ENCODE measurements at regions of chr4 and their contacts with region 1.

Region 1: GRCh38 chr4:781493-782216 is 44.3 kb downstream of the CPLX1 start:
- DNase-seq: peak; percentile 100
- H3K4me3 Mint-ChIP-seq: peak overlapping the region; percentile 88
- H3K27ac Mint-ChIP-seq: peak overlapping the region; percentile 95
- H3K4me1 Mint-ChIP-seq: peaks cover 41% of the 10 kb centered on the region
- H3K27me3 Mint-ChIP-seq: peaks cover 15% of the 10 kb centered on the region

Region 2: GRCh38 chr4:705278-706082 is 76.2 kb before region 1 on chr4 and contains the start of gene PCGF3:
- intact Hi-C with region 1: loop called (anchors 1 kb)
- DNase-seq: peak; percentile 99
- H3K4me3 Mint-ChIP-seq: peak within 1 kb of the TSS; percentile 91
- H3K27ac Mint-ChIP-seq: peak within 1 kb of the TSS; percentile 86
- H3K4me1 Mint-ChIP-seq: peaks cover 17% of the 10 kb centered on the region
- H3K27me3 Mint-ChIP-seq: no peaks in the 10 kb centered on the region
- total RNA-seq, gene PCGF3: 32.1 and 34.5 TPM in 2 replicates

Region 3: GRCh38 chr4:742742-743311 is 38.8 kb before region 1 on chr4:
- intact Hi-C with region 1: no loop called
- DNase-seq: peak; percentile 93
- H3K4me3 Mint-ChIP-seq: no peak overlapping the region
- H3K27ac Mint-ChIP-seq: peak overlapping the region; percentile 53
- H3K4me1 Mint-ChIP-seq: peaks cover 3% of the 10 kb centered on the region
- H3K27me3 Mint-ChIP-seq: no peaks in the 10 kb centered on the region

Region 4: DNA sequence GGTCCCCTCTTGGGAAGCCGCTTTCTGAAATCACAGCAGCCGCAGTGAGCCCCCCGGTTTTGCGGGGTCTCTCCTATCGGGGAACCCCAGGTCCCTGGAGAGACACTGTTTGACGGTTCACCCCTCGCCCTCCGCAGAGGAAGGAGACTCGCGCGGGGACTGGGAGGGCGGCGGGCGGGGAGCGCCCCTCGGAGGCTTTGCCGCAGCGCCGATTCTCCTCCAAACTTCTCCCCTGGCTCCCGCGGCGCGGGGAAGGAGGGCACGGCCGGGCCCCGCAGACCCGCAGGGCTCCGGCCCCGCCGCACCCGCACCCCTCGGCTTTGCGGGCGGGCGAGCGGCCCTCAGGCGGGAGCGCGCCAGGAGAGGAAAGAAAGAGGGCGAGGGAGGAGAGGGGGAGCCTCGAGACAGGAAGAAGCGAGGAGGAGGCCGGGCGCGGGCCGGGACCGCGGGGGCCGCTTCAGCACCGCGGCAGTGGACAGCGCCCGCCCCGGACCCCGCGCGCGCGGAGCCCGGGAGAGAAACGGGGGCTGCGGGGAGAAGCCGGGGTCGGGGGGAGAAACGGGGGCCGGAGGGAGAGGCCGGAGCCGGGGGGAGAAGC is 43.7 kb after region 1 on chr4:
- intact Hi-C with region 1: loop called (anchors 5 kb)
- DNase-seq: peak; percentile 79
- H3K4me3 Mint-ChIP-seq: peak overlapping the region; percentile 39
- H3K27ac Mint-ChIP-seq: peak overlapping the region; percentile 56
- H3K4me1 Mint-ChIP-seq: peaks cover 2% of the 10 kb centered on the region
- H3K27me3 Mint-ChIP-seq: peaks cover 39% of the 10 kb centered on the region

Region 5: DNA sequence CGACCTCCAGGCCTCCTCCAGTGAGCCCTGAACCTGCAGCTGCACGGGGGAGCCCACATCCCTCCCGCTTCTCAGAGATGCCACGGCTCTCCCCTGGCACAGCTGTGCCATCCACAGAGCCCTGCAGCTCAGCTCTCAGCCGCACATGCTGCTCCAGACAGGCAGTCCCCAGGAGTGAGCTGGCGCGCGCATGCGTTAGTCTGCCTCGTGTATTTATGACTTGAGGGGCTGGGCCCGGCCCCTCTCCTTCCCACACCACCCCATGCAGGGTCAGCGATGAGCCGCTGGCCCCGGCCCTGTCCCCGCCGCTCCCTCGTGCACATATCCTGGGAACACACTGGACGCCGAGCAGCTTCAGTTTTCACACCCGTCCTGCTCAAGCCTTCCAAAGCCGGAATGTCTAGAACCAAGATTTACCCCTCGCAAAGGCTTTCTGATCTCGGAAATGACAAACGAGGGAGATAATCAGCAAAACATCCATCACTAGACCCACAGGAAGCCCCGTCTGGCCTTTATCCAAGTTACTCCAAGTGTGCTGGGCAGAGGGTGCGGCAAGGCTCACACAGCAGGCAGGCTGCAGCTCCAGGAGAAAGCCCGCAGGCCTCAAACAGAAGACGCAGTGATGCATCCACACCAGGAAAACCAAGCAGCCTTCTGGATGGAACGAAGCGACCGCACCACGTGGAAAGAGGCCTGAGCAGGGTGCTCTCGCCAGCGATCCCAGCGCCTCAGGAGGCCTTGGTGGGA is 126.2 kb after region 1 on chr4:
- intact Hi-C with region 1: no loop called
- DNase-seq: no peak
- H3K4me3 Mint-ChIP-seq: no peak overlapping the region
- H3K27ac Mint-ChIP-seq: no peak overlapping the region
- H3K4me1 Mint-ChIP-seq: no peaks in the 10 kb centered on the region
- H3K27me3 Mint-ChIP-seq: no peaks in the 10 kb centered on the region

Region 6: GRCh38 chr4:931960-932712 is 150.5 kb after region 1 on chr4 and contains the starts of genes GAK and TMEM175:
- intact Hi-C with region 1: loop called (anchors 5 kb)
- DNase-seq: peak; percentile 100
- H3K4me3 Mint-ChIP-seq: peak within 1 kb of the TSS; percentile 99
- H3K27ac Mint-ChIP-seq: peak within 1 kb of the TSS; percentile 95
- H3K4me1 Mint-ChIP-seq: peaks cover 40% of the 10 kb centered on the region
- H3K27me3 Mint-ChIP-seq: no peaks in the 10 kb centered on the region
- total RNA-seq, gene GAK: 131 and 147 TPM in 2 replicates
- total RNA-seq, gene TMEM175: 12.7 and 13.9 TPM in 2 replicates

Region 7: GRCh38 chr4:973431-974397 is 192.1 kb after region 1 on chr4 and contains the start of gene DGKQ:
- intact Hi-C with region 1: loop called (anchors 1 kb)
- DNase-seq: peak; percentile 95
- H3K4me3 Mint-ChIP-seq: peak within 1 kb of the TSS; percentile 67
- H3K27ac Mint-ChIP-seq: no peak within 1 kb of the TSS
- H3K4me1 Mint-ChIP-seq: peaks cover 5% of the 10 kb centered on the region
- H3K27me3 Mint-ChIP-seq: no peaks in the 10 kb centered on the region
- total RNA-seq, gene DGKQ: 15.2 and 16.6 TPM in 2 replicates

Region 8: DNA sequence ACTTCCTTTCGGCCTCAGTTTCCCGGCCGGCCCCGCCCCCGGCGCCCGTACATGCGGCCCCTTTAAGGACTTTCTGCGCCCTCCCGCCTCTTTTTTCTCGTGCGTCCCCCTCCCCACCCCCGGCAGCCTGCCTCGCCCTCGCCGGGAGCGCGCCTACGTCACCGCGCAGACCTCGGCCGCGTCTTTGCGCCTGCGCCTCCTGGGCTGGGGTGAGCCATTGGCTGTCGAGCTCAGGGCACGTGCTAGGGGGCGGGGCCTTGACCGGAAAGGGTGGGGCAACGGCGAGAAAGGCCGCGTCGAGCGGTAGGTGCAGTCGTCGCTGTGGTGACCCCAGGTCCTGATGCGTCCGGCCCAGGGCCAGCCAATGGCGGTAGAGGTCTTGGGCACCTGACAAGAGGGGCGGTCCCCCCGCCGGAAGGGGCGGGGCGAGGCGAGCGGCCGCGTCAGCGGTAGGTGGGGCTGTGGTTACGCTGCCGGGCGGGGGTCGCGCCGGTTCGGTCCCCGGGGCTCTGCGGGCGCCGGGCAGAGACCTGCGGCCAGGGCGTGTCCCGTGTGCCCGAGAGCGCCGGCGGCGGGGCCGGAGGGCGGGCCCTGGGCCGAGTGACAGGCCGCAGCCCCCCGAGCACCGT is 565.2 kb after region 1 on chr4 and contains the start of gene UVSSA:
- intact Hi-C with region 1: loop called (anchors 5 kb)
- DNase-seq: peak; percentile 100
- H3K4me3 Mint-ChIP-seq: peak within 1 kb of the TSS; percentile 98
- H3K27ac Mint-ChIP-seq: peak within 1 kb of the TSS; percentile 94
- H3K4me1 Mint-ChIP-seq: peaks cover 35% of the 10 kb centered on the region
- H3K27me3 Mint-ChIP-seq: no peaks in the 10 kb centered on the region
- total RNA-seq, gene UVSSA: 28.3 and 28.4 TPM in 2 replicates

Region 9: DNA sequence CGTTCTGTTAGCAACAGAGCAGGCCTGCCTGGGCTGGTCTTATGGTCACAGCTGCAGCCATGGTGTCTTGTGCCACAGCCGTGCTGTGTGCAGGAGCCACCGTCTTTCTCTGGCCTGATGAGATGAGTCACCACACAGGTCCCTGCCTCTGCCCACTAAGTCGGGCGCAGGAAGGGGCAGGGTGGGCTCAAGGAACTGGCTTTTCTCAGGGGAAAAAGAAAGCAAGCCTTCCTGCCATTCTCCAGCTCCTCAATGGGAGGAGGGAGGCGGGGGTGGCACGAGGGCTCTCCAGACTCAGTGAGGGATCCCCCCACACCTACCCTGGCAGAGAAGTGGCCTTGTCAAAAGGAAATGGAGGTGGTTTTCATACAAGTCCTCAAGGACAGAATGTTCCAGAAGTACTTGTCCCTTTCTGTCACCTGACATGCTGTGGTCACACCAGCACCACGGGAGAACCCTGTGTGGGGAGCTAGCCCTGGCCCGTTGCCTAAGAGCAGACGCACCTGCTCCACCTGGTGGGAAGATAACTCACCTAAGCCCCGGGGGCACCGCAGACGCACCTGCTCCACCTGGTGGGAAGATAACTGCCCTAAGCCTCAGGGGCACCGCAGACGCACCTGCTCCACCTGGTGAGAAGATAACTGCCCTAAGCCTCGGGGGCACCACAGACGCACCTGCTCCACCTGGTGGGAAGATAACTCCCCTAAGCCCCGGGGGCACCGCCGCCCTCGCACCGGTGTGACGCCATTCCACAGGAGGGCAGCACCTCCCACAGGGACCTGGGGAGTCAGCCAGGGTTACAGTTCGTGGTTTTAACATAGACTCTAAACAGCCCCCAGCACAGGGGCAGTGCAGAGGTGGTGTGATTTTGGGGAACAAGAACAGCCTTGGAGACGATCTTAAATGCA is 583.9 kb after region 1 on chr4:
- intact Hi-C with region 1: no loop called
- DNase-seq: no peak
- H3K4me3 Mint-ChIP-seq: no peak overlapping the region
- H3K27ac Mint-ChIP-seq: no peak overlapping the region
- H3K4me1 Mint-ChIP-seq: no peaks in the 10 kb centered on the region
- H3K27me3 Mint-ChIP-seq: no peaks in the 10 kb centered on the region

Region 10: GRCh38 chr4:2116687-2117400 is 1335.2 kb after region 1 on chr4:
- intact Hi-C with region 1: no loop called
- DNase-seq: no peak
- H3K4me3 Mint-ChIP-seq: no peak overlapping the region
- H3K27ac Mint-ChIP-seq: no peak overlapping the region
- H3K4me1 Mint-ChIP-seq: peaks cover 2% of the 10 kb centered on the region
- H3K27me3 Mint-ChIP-seq: peaks cover 12% of the 10 kb centered on the region

Measured in activated CD4-positive, alpha-beta T cell treated with anti-CD3 and anti-CD28 coated beads, Interleukin-2, amount 10 ng/mL, durations not matched to agents 24 days and 14 days (primary cell).